T-cell (primary cell): ENCODE measurements at regions of chr10 and their contacts with region 1.

Region 1: DNA sequence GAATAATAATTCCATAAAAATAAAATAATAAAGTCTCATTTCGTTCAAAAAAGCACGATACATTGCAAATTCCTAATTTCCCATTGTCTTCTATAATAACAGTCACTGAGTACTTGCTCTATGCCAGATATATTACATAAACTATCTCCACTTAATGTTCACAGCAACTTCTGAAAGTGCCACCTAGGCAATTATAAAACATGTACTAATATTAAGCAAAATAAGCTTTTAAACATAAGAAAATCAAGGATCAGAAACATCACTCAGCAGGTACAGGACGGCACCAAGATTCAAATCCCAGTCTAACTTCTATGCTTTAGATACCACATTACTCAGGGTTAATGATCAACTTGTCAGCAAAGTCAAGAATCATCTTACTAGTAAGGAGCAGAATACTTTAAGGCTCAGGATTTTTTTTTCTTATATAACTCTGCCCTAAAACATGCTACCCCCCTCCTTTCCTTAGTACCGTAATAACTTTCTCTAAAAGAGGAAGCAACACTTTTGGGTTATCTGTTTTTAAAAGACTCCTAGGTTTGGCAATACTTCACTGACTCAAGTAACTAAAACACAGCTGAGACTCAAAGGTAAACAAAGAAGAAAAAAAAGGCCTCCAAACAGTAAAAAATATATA is 51.3 kb downstream of the USP6NL start:
- DNase-seq: no peak
- ATAC-seq: no peak
- H3K4me3 ChIP-seq: no peak overlapping the region
- H3K4me3 Mint-ChIP-seq: no peak overlapping the region
- H3K27ac ChIP-seq: no peak overlapping the region
- H3K27ac Mint-ChIP-seq: no peak overlapping the region
- H3K4me1 ChIP-seq: no peaks in the 10 kb centered on the region
- H3K4me1 Mint-ChIP-seq: peaks cover 0 to 14% (median 5%) of the 10 kb centered on the region in 3 donors
- H3K27me3 ChIP-seq: no peaks in the 10 kb centered on the region
- H3K27me3 Mint-ChIP-seq: no peaks in the 10 kb centered on the region

Region 2: DNA sequence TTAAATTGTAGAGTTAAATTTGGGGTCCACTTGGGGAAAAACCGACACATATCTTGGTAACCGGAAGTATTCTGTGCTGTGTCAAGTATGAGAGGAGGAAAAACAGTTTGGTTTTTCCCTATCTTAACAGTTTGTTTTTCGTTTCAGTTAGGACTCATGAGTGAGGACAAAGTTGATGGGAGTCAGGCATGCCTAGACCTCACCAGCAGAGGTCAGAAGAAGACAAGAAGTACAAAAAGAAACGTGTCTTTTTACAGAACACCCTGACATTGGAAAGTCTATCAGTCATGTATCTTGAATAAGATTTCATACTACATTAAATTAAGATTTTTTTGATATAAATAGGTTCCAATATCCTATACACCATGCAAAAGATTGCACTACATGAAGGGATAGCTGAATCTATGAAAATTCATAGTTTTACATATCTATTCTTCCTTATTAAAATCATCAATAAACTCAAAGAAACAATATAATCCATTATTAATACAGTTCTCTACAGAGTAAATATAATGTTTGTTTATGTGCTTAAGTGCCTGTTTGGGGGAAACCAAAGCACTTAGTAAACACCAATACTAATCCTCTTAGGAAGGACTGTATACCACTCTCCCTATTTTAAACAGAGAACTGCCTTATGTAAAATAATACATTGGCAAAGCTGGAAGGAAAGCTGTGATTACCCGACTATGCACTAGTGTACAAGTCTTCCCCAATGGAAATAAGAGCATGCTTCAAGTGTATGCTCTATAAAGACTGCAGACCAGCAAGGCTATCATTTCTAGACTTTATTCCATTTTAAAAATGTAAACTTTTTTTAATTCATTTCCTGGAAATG is 44.4 kb before region 1 on chr10:
- CTCF ChIA-PET with region 1: no interaction called
- POLR2A ChIA-PET with region 1: no interaction called
- DNase-seq: peak in 31 of 35 experiments; percentile 8 to 78 (median 35)
- ATAC-seq: peak; percentile 54 to 71 (median 62)
- H3K4me3 ChIP-seq: no peak overlapping the region
- H3K4me3 Mint-ChIP-seq: no peak overlapping the region
- H3K27ac ChIP-seq: no peak overlapping the region
- H3K27ac Mint-ChIP-seq: no peak overlapping the region
- H3K4me1 ChIP-seq: peaks cover 0 to 2% of the 10 kb centered on the region in 2 experiments
- H3K4me1 Mint-ChIP-seq: peaks cover 4 to 7% (median 4%) of the 10 kb centered on the region in 3 donors
- H3K27me3 ChIP-seq: no peaks in the 10 kb centered on the region
- H3K27me3 Mint-ChIP-seq: no peaks in the 10 kb centered on the region

Region 3: GRCh38 chr10:11533328-11533781 is 26.8 kb before region 1 on chr10:
- CTCF ChIA-PET with region 1: no interaction called
- POLR2A ChIA-PET with region 1: no interaction called
- DNase-seq: no peak
- ATAC-seq: peak in 1 of 4 experiments; percentile 11
- H3K4me3 ChIP-seq: no peak overlapping the region
- H3K4me3 Mint-ChIP-seq: no peak overlapping the region
- H3K27ac ChIP-seq: no peak overlapping the region
- H3K27ac Mint-ChIP-seq: no peak overlapping the region
- H3K4me1 ChIP-seq: peaks cover 0 to 15% of the 10 kb centered on the region in 2 experiments
- H3K4me1 Mint-ChIP-seq: peaks cover 25 to 43% (median 30%) of the 10 kb centered on the region in 3 donors
- H3K27me3 ChIP-seq: peaks cover 0 to 3% of the 10 kb centered on the region in 2 experiments
- H3K27me3 Mint-ChIP-seq: no peaks in the 10 kb centered on the region

Region 4: DNA sequence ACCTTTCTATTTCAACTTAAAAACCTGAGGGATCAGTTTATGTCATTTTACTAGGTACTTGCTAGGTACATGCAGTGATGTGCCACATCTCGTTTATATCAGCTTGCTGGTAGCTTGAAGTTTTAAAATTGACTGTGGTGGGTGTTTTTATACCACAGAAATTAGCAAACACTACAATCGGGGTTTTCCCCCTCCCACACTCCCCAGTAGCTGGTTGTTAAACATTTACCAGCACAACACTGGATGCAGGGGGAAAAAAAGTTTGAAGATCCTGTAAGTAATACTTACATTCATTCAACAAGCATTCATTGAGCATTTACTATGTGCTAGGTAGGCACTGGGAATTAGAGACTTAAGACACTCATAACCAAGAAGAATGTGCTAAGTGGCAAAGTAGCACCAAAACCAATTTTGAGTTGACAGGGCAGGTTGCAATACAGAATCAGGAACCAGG is 18.6 kb after region 1 on chr10:
- CTCF ChIA-PET with region 1: no interaction called
- POLR2A ChIA-PET with region 1: no interaction called
- DNase-seq: peak in 7 of 35 experiments; percentile 1 to 27 (median 4)
- ATAC-seq: peak in 1 of 4 experiments; percentile 43
- H3K4me3 ChIP-seq: no peak overlapping the region
- H3K4me3 Mint-ChIP-seq: no peak overlapping the region
- H3K27ac ChIP-seq: no peak overlapping the region
- H3K27ac Mint-ChIP-seq: no peak overlapping the region
- H3K4me1 ChIP-seq: peaks cover 0 to 2% of the 10 kb centered on the region in 2 experiments
- H3K4me1 Mint-ChIP-seq: peaks cover 20 to 52% (median 30%) of the 10 kb centered on the region in 3 donors
- H3K27me3 ChIP-seq: no peaks in the 10 kb centered on the region
- H3K27me3 Mint-ChIP-seq: no peaks in the 10 kb centered on the region

Region 5: DNA sequence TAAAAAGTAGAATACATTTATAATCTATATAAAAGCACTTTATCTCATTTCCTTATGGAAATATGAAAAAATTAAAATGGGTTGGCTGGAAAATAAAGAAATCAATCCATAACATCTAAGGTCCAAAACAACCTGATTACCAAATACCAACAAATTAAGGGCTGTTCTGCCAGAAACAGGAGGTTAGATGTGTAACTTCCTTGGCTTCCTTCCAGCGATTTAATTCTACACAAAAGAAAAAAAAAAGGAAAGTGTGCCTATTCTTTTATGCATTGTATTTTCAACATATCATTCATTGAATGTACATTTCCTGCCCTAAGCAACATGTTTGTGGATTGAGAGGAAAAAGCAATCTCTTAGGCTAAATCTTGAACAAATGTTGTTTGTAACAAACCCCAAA is 87.5 kb after region 1 on chr10:
- CTCF ChIA-PET with region 1: interaction called in 1 of 2 experiments, 16 read pairs
- POLR2A ChIA-PET with region 1: no interaction called
- DNase-seq: no peak
- ATAC-seq: no peak
- H3K4me3 ChIP-seq: no peak overlapping the region
- H3K4me3 Mint-ChIP-seq: no peak overlapping the region
- H3K27ac ChIP-seq: no peak overlapping the region
- H3K27ac Mint-ChIP-seq: no peak overlapping the region
- H3K4me1 ChIP-seq: no peaks in the 10 kb centered on the region
- H3K4me1 Mint-ChIP-seq: peaks cover 0 to 1% (median 0%) of the 10 kb centered on the region in 3 donors
- H3K27me3 ChIP-seq: peaks cover 0 to 6% of the 10 kb centered on the region in 2 experiments
- H3K27me3 Mint-ChIP-seq: peaks cover 0 to 9% of the 10 kb centered on the region in 2 donors